ENCODE measurements at regions of chr2 and their contacts with region 1.

Region 1: GRCh38 chr2:144937910-144938709 is 418.2 kb upstream of the ZEB2 start:
- DNase-seq: peak in 2 of 4 experiments; percentile 22 to 58
- ATAC-seq: peak; percentile 47
- H3K4me3 ChIP-seq: no peak overlapping the region
- H3K27ac ChIP-seq: peak overlapping the region; percentile 42; the same call in 2 of the 3 replicates
- H3K4me1 ChIP-seq: peaks cover 0 to 16% of the 10 kb centered on the region in 2 experiments; a peak in 3 of 5 replicates
- H3K27me3 ChIP-seq: no peaks in the 10 kb centered on the region
- CTCF ChIP-seq: no peak
- EP300 ChIP-seq: no peak
- POLR2A ChIP-seq: no peak
- RAD21 ChIP-seq: no peak; a peak in 1 of 4 replicates

Region 2: DNA sequence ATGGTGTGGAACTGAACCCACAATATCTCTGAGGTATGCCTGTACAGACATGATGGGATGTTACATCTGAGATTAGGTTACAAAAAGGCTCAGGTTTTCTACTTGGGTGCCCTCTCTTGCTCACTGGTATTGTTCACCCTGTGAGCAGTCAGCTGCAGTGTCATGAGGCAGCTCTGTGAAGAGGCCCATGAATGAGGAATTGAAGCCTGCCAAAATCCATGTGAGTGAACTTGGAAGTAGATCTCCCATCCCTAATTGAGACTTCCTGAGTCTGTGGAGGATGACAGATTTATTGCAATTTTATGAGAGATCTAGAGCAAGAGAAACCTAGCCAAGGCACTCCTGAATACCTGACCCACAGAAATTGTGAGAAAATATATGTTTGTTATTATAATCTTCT is 13.3 kb before region 1 on chr2:
- CTCF ChIA-PET with region 1: no interaction called
- POLR2A ChIA-PET with region 1: interaction called, 13 read pairs
- in situ Hi-C with region 1: no loop called
- intact Hi-C with region 1: no loop called
- DNase-seq: no peak
- ATAC-seq: no peak
- H3K4me3 ChIP-seq: no peak overlapping the region
- H3K27ac ChIP-seq: no peak overlapping the region
- H3K4me1 ChIP-seq: peaks cover 0 to 3% of the 10 kb centered on the region in 2 experiments; a peak in 2 of 5 replicates
- H3K27me3 ChIP-seq: no peaks in the 10 kb centered on the region
- CTCF ChIP-seq: no peak
- EP300 ChIP-seq: no peak
- POLR2A ChIP-seq: no peak
- RAD21 ChIP-seq: no peak